Heart left ventricle (tissue), 16 donors: ENCODE measurements at regions of chr1 and their contacts with region 1.

Region 1: DNA sequence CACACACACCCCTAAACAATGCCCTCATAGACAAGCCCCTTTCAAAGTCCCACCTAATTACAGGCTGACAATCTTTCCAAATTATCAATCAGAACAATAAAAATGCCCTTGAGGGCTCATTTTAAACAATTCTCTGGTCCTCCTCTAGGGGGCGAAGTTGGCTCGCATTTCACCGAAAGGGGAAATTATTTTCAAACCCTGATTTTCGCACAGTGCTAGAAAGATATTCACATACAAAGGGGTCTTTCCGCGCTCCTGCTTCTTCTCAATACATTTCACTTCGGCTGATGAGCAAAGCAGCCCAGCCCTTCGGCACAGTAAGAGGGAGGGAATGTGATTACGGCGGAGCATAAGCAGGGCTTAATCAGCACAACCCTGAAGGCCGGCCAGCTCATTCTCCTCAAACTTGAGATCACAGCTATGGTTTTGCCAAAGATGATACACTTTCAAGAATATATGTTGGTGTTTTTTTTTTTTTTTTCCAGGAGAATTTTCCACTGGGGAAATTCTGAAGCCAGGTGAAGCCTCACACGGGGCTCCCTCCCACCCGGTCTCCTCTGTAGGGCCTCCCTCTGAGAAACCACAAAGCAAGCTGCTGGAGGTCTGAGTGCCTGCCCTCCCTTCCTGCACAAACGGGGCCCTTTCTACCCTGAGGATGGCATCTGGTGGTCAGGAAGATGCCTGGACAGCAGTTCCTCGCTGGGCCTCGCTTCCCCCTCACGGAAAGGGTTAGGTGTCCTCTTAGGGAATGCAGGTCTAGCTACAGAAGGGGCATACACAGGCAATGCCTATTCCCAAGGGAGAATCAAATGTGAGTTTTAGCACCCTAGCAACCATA is 66.9 kb downstream of the GNG12 start:
- DNase-seq: peak in 3 of 5 donors; percentile 31 to 54 (median 42)
- ATAC-seq: peak in 3 of 4 donors; percentile 62 to 78 (median 73)
- H3K4me3 ChIP-seq: peak overlapping the region in 8 of 12 donors; percentile 11 to 49 (median 36)
- H3K27ac ChIP-seq: peak overlapping the region in 1 of 12 donors; percentile 37
- H3K4me1 ChIP-seq: peaks cover 0 to 22% (median 8%) of the 10 kb centered on the region in 12 donors
- H3K27me3 ChIP-seq: no peaks in the 10 kb centered on the region
- CTCF ChIP-seq: peak; percentile 67 to 82 (median 76)
- POLR2A ChIP-seq: no peak

Region 2: DNA sequence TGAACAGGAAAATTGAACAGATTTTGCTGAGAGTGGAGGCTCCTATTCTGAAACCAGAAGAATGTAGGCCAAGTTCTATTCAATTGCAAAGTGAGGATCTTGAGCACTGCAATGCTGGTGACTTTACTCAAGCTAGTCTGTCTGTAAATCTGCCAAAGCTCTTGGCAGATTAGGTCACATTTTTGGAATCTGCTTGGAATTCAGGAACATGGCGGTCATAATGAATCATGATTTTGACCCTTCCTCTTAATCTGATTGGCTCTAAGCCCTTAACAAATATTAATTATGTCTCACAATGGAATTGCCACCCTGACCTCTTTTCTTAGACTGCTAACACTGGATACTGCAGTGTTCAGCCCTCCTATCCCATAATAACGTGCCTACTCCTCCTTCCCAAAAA is 74.1 kb after region 1 on chr1:
- intact Hi-C with region 1: loop called in 3 of 10 experiments (anchors 5 kb)
- DNase-seq: no peak
- ATAC-seq: peak in 3 of 4 donors; percentile 45 to 77 (median 55)
- H3K4me3 ChIP-seq: no peak overlapping the region
- H3K27ac ChIP-seq: no peak overlapping the region
- H3K4me1 ChIP-seq: peaks cover 0 to 20% (median 10%) of the 10 kb centered on the region in 12 donors
- H3K27me3 ChIP-seq: peaks cover 0 to 6% (median 0%) of the 10 kb centered on the region in 9 donors
- CTCF ChIP-seq: no peak
- POLR2A ChIP-seq: no peak

Region 3: DNA sequence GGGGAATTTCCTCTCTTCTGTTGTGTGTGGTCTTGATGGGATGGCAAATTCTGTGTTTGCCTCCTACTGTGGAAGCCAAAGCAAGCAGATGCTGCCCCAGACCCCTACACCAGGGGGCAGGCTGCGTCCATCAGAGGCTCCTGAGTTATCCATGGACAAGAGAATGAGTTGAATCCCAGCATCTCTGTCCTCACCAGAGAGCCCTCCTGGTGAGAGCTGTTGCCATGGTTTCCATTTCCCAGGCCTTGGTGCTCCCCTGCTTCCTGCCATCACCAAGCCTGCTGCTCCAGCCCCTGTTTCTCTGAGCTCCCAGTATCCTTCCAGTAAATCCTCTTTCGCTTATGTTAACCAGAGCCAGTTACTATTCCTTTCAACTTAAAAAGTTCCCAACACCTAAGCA is 87.3 kb after region 1 on chr1:
- intact Hi-C with region 1: loop called in 5 of 10 experiments (anchors 2 to 5 kb)
- DNase-seq: peak; percentile 38 to 75 (median 47)
- ATAC-seq: peak; percentile 56 to 85 (median 76)
- H3K4me3 ChIP-seq: no peak overlapping the region
- H3K27ac ChIP-seq: no peak overlapping the region
- H3K4me1 ChIP-seq: peaks cover 0 to 15% (median 10%) of the 10 kb centered on the region in 12 donors
- H3K27me3 ChIP-seq: no peaks in the 10 kb centered on the region
- CTCF ChIP-seq: peak; percentile 53 to 80 (median 70)
- POLR2A ChIP-seq: no peak

Region 4: DNA sequence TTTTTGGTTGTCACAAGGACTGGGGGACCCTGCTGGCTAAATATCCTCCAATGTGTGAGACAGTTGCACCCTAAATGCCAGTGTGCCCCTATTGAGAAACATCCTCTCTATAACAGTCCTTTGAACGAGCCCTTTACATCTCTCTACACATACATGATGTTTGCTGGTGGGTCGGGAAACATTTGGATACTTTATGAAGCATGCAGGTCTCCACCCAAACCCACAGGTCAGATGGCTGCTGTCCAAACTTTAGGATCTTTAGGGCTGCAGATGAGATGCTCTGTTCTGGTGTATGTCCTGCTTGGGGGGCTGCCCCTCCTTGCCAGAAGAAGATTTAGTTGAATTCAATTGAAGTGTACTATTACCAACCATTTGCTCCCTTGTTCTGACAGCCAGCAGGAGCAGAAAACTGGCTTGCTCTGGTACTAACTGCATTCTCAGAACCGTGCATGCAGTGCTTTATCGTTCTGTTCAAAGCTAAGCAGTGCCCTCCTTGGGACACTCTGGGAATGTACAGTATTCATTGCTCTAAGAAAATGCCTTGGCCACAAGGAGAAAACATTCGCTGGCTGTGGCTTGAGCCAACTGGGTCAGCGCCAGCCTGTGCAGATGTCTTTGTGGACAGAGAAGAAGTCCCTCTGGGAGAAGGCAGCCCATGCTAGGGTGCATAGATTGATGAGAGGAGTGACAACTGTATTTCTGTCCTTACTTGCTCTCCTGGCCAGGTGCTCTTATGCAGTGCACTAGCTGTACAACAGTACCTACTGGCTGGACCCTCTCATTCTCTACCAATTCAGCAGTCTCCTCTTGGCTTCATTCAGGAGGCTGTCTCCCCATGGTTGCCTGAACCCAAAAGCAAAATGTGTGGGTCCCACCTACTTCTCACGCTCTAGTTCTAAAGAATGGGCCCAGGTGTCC is 345.4 kb after region 1 on chr1:
- intact Hi-C with region 1: loop called (anchors 2 to 10 kb)
- DNase-seq: peak; percentile 57 to 80 (median 70)
- ATAC-seq: peak; percentile 82 to 91 (median 88)
- H3K4me3 ChIP-seq: no peak overlapping the region
- H3K27ac ChIP-seq: no peak overlapping the region
- H3K4me1 ChIP-seq: peaks cover 0 to 28% (median 16%) of the 10 kb centered on the region in 12 donors
- H3K27me3 ChIP-seq: no peaks in the 10 kb centered on the region
- CTCF ChIP-seq: peak; percentile 25 to 73 (median 48)
- POLR2A ChIP-seq: no peak

Region 5: GRCh38 chr1:68346188-68346808 is 579.9 kb after region 1 on chr1:
- intact Hi-C with region 1: loop called in 6 of 10 experiments (anchors 5 to 10 kb)
- DNase-seq: no peak
- ATAC-seq: peak in 1 of 4 donors; percentile 34
- H3K4me3 ChIP-seq: no peak overlapping the region
- H3K27ac ChIP-seq: no peak overlapping the region
- H3K4me1 ChIP-seq: peaks cover 0 to 5% (median 0%) of the 10 kb centered on the region in 12 donors
- H3K27me3 ChIP-seq: no peaks in the 10 kb centered on the region
- CTCF ChIP-seq: peak; percentile 37 to 67 (median 43)
- POLR2A ChIP-seq: no peak